ENCODE measurements at regions of chr11 and their contacts with region 1.

Region 1: DNA sequence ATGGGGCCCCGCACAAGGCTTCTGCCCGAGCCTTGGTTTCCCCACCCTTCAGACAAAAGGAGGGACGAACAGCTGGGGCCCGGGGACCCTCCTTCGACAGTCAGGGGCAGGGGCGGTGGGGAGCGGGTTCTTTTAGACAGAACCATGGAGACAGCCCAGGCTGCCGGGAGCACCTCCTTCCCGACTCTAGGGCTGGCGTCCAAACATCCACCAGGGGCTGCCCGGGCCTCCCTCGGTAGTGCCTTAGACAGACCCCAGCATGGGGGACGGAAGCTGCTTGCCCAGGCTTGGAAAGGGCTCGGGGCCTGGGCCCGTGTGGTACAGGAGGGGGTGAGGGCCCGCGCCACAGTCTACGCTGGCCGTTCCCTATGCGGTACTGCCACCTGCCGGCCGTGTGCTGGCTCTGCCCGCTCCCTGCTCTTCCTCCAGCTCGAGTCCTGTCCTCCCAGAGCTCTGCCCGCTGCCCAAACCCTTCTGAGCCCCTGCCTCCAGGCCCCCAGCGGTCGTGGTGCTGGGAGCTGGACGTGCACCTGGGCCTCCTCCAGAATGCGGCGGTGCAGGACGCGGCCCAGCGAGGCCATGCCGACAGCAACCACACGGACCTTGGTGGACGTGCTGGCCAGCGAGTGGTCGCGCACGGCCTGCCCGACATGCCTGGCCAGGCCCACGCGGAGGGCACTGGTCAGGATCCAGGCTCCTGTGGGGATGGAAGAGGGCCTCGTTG is 20.1 kb downstream of the TSSC4 start:
- DNase-seq: no peak
- H3K4me3 ChIP-seq: no peak overlapping the region
- H3K27me3 ChIP-seq: no peaks in the 10 kb centered on the region
- CTCF ChIP-seq: peak; percentile 95

Region 2: DNA sequence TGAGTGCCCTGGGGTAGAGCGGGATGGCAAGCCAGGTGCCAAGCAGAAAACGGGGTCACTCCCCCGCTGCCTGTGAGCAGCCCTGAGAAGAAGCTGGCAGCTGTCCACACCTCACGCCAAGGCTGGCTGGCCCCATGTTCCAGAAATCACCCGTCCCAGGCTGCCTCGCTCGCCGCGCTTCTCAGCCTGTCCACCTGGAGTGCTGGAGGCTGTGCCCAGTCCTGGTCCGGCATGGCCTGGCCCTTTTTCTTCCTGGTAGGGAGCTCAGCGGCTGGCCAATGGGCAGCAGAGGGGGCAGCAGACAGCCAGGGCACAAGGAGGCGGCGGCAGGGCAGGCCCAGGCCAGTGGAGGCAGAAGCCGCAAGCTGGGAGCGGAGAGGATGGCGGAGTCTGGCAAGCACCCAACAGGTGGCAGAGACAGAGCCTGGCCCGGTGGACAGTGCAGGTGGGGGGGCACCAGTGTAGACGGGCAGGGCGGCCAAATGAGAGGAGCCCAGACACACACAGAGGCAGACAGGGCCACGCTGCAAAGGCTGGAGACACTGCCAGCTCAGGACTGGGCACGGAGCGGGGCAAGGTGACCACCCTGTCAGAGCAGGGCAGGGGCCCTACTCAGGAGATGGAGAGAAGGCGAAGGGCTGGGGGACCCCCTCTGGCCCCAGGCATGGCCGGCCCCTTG is 211.8 kb before region 1 on chr11:
- CTCF ChIA-PET with region 1: interaction called, 122 read pairs
- POLR2A ChIA-PET with region 1: no interaction called
- DNase-seq: no peak
- H3K4me3 ChIP-seq: no peak overlapping the region
- H3K27me3 ChIP-seq: peaks cover 4% of the 10 kb centered on the region; the same call in 1 of the 2 replicates
- CTCF ChIP-seq: no peak

Region 3: GRCh38 chr11:2298795-2299761 is 121.6 kb before region 1 on chr11:
- CTCF ChIA-PET with region 1: interaction called, 519 read pairs
- POLR2A ChIA-PET with region 1: interaction called, 15 read pairs
- DNase-seq: no peak
- H3K4me3 ChIP-seq: no peak overlapping the region
- H3K27me3 ChIP-seq: peaks cover 2% of the 10 kb centered on the region; the same call in 1 of the 2 replicates
- CTCF ChIP-seq: no peak

Region 4: GRCh38 chr11:2382936-2383851 is 37.5 kb before region 1 on chr11:
- CTCF ChIA-PET with region 1: interaction called, 17 read pairs
- POLR2A ChIA-PET with region 1: no interaction called
- DNase-seq: no peak
- H3K4me3 ChIP-seq: no peak overlapping the region
- H3K27me3 ChIP-seq: no peaks in the 10 kb centered on the region
- CTCF ChIP-seq: peak; percentile 8; the same call in 1 of the 2 replicates

Region 5: DNA sequence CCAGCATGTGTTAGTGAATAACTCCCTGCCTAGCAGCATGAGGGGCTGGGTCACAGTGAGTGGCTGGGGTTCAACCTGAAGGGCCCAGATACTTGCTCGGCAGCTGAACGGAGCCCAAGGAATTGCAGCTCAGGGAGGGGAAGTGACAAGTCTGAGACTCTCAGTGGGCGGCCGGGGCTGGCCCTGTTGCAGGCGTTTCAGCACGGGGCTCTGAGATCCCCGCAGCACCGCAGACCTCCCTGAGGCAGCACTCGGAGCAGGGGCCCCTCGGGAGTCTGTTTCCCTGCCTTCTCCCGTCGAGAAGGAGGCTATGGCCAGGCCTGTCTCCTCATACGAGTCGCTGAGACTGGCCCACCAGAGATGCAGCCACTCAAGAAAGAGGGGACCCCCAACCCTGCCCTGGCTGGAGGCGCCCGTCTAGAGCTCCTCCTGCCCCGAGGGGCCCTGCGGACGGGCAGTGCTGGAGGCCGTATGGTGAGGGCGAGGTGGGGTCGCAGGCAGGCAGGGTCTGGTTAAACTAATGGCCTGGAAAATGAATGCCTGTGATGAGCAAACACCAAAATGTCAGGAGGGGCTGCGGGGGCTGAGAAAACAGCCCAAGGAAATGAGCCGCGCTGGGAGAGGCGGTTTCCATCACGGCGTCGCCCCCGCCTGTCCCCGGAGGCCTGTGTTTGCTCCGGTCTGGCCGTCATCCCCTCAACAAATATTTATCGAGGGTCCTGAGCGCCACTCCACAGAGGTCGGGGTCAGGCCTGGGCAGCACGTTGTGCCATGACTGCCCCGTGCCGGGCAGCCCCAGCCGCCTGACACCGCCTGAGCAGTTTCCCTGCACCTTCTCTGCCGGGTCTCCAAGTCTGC is 10.8 kb before region 1 on chr11:
- CTCF ChIA-PET with region 1: interaction called, 31 read pairs
- POLR2A ChIA-PET with region 1: no interaction called
- DNase-seq: no peak
- H3K4me3 ChIP-seq: no peak overlapping the region
- H3K27me3 ChIP-seq: peaks cover 8% of the 10 kb centered on the region
- CTCF ChIP-seq: no peak